ENCODE measurements at regions of chr11 and their contacts with region 1.

Region 1: GRCh38 chr11:96215110-96215782 is 127.7 kb downstream of the MAML2 start:
- DNase-seq: peak; percentile 93
- H3K4me3 ChIP-seq: peak overlapping the region; percentile 36
- H3K27ac ChIP-seq: peak overlapping the region; percentile 88
- H3K4me1 ChIP-seq: peaks cover 76% of the 10 kb centered on the region
- CTCF ChIP-seq: no peak

Region 2: DNA sequence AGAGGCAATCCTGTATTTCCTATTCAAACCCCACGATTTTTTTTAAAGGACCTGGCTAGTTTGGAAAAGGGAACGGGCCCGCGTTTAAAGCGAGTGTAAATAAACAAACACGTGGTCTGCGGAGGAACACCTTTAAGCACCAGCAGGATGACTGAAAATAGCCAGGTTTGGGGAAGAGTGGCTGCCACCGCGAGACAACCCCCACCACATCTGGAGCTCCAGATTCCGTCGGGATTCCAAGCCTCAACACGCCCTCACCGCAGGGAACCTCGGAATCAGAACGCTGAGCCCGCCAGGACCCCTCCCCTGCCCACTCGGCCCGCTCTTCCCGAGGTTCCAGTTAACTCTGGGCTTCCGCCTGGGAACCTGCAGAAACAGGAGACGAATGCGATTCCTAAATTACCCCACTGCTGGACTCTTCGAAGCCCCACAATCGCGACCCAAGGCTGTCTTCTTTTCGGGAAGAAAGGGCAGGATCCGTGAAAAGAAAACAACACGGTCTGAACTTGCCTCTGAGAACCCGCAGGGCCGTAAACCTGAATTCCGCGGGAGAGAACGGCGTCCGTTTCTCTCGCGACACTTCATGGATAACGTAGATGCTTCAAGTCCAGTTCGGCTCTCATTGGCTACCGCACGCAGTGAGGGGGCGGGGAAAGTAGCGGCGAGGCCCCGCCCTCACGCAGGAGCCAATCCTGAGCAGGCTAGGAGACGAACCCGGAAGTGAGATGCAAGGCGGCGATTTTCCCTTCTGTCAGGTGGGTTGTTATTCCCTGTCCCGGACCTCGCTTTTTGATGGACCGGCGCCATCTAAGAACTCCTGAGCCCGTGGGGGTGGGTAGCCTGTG is 1721.7 kb before region 1 on chr11 and contains the starts of genes ANKRD49 and MRE11:
- CTCF ChIA-PET with region 1: no interaction called
- POLR2A ChIA-PET with region 1: no interaction called
- intact Hi-C with region 1: no loop called
- DNase-seq: peak; percentile 97
- H3K4me3 ChIP-seq: peak within 1 kb of the TSS; percentile 88
- H3K27ac ChIP-seq: peak within 1 kb of the TSS; percentile 58
- H3K4me1 ChIP-seq: peaks cover 25% of the 10 kb centered on the region
- CTCF ChIP-seq: no peak
- total RNA-seq, gene ANKRD49: 26.1 and 29.2 TPM in 2 replicates
- total RNA-seq, gene MRE11: 42.6 and 44.4 TPM in 2 replicates

Region 3: DNA sequence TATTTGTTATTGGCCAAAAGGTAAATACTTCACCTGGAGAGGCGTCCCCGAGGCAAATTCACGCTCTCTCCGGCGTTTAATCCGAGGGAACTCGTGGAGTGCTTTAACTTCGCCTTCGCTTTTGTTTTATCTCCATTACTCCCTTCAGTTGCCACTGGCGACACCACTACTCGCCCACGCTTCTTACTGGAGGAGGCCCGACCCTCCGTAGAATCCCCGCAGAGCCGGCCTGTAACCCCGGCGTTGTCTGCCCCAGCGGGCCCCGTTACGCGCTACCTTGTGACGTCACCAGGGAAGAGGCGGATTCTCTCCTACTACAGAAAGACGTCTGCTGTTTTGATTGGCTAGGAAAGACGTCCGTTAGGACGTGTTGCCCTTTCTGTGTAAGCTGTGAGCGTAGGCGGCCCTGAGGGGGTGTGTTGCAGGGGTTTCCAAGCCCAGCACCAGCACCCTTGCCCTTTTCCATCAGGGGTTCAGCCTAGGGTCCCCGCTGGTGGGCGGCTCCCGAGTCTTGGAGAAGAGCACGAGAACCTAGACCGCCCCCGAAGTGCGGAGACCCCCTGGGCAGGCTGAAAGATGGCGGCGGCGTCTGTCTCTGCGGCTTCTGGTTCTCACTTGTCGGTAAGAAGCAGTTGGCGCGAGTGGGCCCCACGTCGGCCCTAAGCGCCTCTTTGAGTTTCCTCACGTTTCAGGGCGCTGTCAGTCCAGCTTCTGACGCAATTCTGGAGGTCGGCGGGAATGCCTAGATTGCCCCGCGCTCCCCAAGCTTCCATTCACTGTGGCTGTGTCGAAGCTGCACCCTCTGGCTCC is 424.9 kb before region 1 on chr11 and contains the start of gene CEP57:
- CTCF ChIA-PET with region 1: no interaction called
- POLR2A ChIA-PET with region 1: interaction called, 3 read pairs
- intact Hi-C with region 1: loop called (anchors 10 kb)
- DNase-seq: peak; percentile 98
- H3K4me3 ChIP-seq: peak within 1 kb of the TSS; percentile 83
- H3K27ac ChIP-seq: peak within 1 kb of the TSS; percentile 94
- H3K4me1 ChIP-seq: peaks cover 28% of the 10 kb centered on the region
- CTCF ChIP-seq: no peak
- total RNA-seq, gene CEP57: 53.5 and 57.7 TPM in 2 replicates

Region 4: GRCh38 chr11:96185220-96185768 is 30.0 kb before region 1 on chr11:
- CTCF ChIA-PET with region 1: no interaction called
- POLR2A ChIA-PET with region 1: interaction called, 3 read pairs
- intact Hi-C with region 1: loop called (anchors 1 kb)
- DNase-seq: peak; percentile 72
- H3K4me3 ChIP-seq: no peak overlapping the region
- H3K27ac ChIP-seq: no peak overlapping the region
- H3K4me1 ChIP-seq: peaks cover 16% of the 10 kb centered on the region
- CTCF ChIP-seq: no peak

Region 5: GRCh38 chr11:96235751-96236150 is 20.5 kb after region 1 on chr11:
- CTCF ChIA-PET with region 1: interaction called, 4 read pairs
- POLR2A ChIA-PET with region 1: interaction called, 11 read pairs
- intact Hi-C with region 1: no loop called
- DNase-seq: no peak
- H3K4me3 ChIP-seq: no peak overlapping the region
- H3K27ac ChIP-seq: no peak overlapping the region
- H3K4me1 ChIP-seq: peaks cover 6% of the 10 kb centered on the region
- CTCF ChIP-seq: no peak

Region 6: GRCh38 chr11:96257972-96258934 is 43.0 kb after region 1 on chr11:
- CTCF ChIA-PET with region 1: interaction called, 3 read pairs
- POLR2A ChIA-PET with region 1: interaction called, 4 read pairs
- intact Hi-C with region 1: loop called (anchors 1 kb)
- DNase-seq: peak; percentile 81
- H3K4me3 ChIP-seq: peak overlapping the region; percentile 43
- H3K27ac ChIP-seq: peak overlapping the region; percentile 81
- H3K4me1 ChIP-seq: peaks cover 71% of the 10 kb centered on the region
- CTCF ChIP-seq: no peak